Activated T-helper 1 cell treated with anti-CD3 and anti-CD28 coated beads, Interleukin-12 subunit alpha, Interleukin-12 subunit beta, Interleukin-2, Interleukin-4 antibody, amounts not matched to agents 30 ng/mL and 10 ng/mL and 1 ng/mL, durations not matched to agents 14 hours and 24 hours and 36 hours (primary cell): ENCODE measurements at regions of chr10 and their contacts with region 1.

Region 1: GRCh38 chr10:71766702-71767419 is 6.5 kb downstream of the VSIR start:
- DNase-seq: no peak
- H3K4me3 Mint-ChIP-seq: peak overlapping the region; percentile 69
- H3K27ac Mint-ChIP-seq: peak overlapping the region; percentile 80
- H3K4me1 Mint-ChIP-seq: peaks cover 81% of the 10 kb centered on the region
- H3K27me3 Mint-ChIP-seq: no peaks in the 10 kb centered on the region

Region 2: DNA sequence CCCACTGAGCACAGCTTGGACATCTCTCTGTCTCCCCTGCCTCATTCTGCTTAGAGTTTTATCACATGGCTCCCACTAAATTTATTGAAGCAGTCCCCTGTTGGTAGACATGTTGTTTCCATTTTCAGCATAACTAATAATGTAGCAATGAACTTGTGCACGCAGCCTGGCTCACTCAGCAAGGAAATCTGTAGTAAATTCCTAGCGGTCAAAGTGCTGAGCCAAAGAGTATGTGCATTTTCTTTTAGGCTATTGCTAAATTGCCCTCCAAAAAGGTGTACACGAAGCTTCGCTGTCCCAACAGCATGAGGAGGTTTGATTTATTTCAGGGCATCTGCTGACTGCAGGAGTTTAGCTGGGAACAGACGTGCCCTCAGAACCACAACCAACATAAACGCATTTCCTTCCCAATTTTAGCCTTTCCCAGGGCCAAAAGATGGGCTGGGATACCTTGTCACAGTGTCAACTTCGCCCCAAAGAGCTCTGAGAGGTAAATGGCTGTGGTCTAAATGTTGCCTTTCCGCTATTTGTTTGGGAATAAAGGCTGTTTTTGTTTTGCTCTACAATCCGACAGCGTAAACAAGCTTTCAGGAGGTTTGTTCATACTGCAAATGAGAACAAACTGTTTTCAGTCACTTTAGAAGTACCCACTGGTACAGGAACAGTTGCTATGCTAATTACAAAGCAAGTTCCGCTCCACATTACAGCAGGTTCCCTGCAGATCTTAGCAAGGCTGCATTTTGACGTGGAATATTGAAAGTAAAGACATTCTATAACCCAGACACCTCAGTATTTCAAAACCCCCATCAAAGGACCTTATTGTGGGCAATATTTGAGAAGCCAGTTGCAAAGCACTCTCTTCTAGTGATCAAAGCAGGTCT is 10.3 kb before region 1 on chr10:
- intact Hi-C with region 1: loop called (anchors 1 kb)
- DNase-seq: no peak
- H3K4me3 Mint-ChIP-seq: peak overlapping the region; percentile 70
- H3K27ac Mint-ChIP-seq: peak overlapping the region; percentile 94
- H3K4me1 Mint-ChIP-seq: peaks cover 82% of the 10 kb centered on the region
- H3K27me3 Mint-ChIP-seq: no peaks in the 10 kb centered on the region